ENCODE measurements at regions of chr11 and their contacts with region 1.

Region 1: DNA sequence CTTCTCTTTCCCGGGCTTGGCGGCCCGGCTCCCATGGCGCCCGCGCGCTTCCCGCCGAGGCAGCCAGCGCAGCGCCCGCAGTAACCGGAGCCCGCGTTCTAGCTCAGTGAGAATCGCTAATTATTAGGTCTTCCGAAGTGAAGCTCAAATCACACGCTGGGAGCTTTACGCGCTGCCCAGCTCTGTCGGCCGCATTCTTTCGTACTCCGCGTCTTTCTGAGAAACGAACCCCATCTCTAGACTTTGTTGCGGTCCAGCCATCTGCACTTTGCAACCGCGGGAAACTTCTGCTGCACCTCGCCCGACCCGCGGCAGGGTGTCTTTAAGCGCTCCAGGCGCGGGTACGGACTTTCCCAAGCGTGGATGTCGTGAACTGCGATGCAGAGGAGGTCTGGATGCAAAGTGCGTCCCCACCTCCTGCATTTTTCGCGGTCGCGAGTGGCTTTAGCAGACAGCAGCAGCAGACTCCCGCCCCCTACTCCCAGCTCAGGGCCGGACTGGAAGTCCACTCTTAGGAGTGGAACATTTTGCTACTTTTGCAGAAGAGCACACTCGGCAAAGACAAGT is 6.0 kb upstream of the PAX6 start:
- DNase-seq: peak; percentile 44
- ATAC-seq: no peak
- H3K4me3 Mint-ChIP-seq: peak overlapping the region; percentile 26
- H3K27ac Mint-ChIP-seq: no peak overlapping the region
- H3K4me1 Mint-ChIP-seq: peaks cover 32% of the 10 kb centered on the region
- H3K27me3 Mint-ChIP-seq: peaks cover 58% of the 10 kb centered on the region

Region 2: GRCh38 chr11:31798554-31799434 is 18.3 kb before region 1 on chr11:
- CTCF ChIA-PET with region 1: interaction called, 4 read pairs
- POLR2A ChIA-PET with region 1: no interaction called
- intact Hi-C with region 1: loop called in 1 of 2 experiments (anchors 1 kb)
- DNase-seq: peak; percentile 57
- ATAC-seq: peak; percentile 47
- H3K4me3 Mint-ChIP-seq: no peak overlapping the region
- H3K27ac Mint-ChIP-seq: no peak overlapping the region
- H3K4me1 Mint-ChIP-seq: peaks cover 36% of the 10 kb centered on the region
- H3K27me3 Mint-ChIP-seq: peaks cover 74% of the 10 kb centered on the region

Region 3: DNA sequence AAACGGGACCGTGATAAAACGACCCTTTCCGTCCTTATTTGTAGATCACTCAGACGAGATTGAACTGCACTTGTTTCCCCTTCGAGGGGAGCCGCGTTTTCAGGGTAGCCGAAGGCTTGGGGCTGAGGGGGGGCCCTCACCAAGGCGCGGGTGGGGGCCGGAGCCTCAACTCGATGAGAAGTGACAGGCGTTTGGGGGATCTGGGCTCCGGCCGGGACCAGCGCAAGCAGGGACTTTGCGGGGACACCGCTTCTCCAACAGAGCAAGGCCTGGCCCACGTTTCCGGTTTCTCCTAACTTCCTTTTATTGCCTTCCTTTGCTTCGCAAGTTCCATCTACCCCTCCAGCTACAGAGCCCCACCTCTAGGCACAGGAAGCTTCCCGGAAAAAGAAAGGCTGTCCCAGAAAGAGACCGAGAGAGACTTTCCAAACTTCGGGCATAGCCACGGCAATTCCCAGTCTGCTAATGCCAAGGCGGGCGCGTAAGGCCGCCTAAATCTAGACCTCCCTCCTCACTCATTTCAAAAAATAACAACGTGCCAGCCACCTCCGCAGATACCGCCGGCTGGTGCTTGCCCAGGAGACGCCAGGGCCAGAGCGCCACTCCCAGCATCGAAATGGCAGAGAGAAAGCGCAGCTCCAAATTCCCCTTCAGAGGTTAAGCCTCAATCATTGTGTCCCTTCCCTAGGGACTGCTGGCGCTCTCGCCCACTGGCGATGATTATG is 12.7 kb before region 1 on chr11:
- CTCF ChIA-PET with region 1: interaction called, 4 read pairs
- POLR2A ChIA-PET with region 1: no interaction called
- intact Hi-C with region 1: loop called (anchors 1 to 2 kb)
- DNase-seq: peak; percentile 30
- ATAC-seq: no peak
- H3K4me3 Mint-ChIP-seq: peak overlapping the region; percentile 39
- H3K27ac Mint-ChIP-seq: no peak overlapping the region
- H3K4me1 Mint-ChIP-seq: peaks cover 41% of the 10 kb centered on the region
- H3K27me3 Mint-ChIP-seq: peaks cover 82% of the 10 kb centered on the region

Region 4: DNA sequence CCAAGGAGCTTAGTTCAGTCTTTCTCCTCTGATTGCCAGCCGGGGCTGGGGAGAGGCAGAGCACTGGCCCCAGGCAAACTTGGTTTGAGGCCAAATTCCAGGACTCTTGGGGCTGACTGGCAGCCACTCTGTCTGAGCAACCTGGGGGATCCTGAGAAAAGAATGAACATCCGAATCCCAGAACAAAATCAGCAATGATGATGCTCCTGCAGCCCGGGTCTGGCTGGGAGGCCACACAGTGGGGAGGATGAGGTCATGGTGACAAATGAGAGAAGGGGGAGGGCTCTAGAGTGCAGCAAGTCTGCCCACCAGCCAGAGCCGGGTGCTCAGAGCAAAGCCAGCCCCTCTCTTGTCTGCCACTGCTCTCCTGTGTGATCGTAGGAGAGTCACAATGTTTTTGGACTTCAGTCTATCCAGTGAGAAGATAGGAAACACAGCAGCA is 65.8 kb after region 1 on chr11:
- CTCF ChIA-PET with region 1: no interaction called
- POLR2A ChIA-PET with region 1: no interaction called
- intact Hi-C with region 1: no loop called
- DNase-seq: no peak
- ATAC-seq: no peak
- H3K4me3 Mint-ChIP-seq: no peak overlapping the region
- H3K27ac Mint-ChIP-seq: no peak overlapping the region
- H3K4me1 Mint-ChIP-seq: no peaks in the 10 kb centered on the region
- H3K27me3 Mint-ChIP-seq: peaks cover 18% of the 10 kb centered on the region

Region 5: DNA sequence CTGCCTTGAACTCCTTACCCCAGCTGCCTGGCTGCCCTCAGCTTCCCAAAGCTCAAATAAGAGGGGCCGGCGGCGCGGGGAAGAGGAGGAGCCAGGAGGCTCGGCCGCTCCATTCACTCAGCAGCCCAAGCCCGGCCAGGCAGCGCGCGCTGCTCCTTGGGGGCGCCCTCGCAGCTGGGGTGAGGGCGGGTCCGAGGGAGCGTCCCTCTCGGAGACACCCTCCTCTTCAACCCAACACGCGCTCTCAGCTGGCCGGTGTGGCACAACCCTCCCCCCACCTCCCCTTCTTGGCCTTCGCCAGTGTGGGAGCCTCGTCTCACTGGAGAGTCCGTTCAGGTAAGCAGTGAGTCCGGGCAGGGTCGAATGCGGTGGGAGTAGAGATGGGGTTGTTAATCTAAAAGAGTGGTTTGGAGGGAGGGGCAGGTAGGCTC is 618.4 kb after region 1 on chr11 and contains the start of gene WT1:
- CTCF ChIA-PET with region 1: no interaction called
- POLR2A ChIA-PET with region 1: no interaction called
- intact Hi-C with region 1: loop called (anchors 5 kb)
- DNase-seq: peak; percentile 21
- ATAC-seq: no peak
- H3K4me3 Mint-ChIP-seq: peak within 1 kb of the TSS; percentile 13
- H3K27ac Mint-ChIP-seq: no peak within 1 kb of the TSS
- H3K4me1 Mint-ChIP-seq: peaks cover 37% of the 10 kb centered on the region
- H3K27me3 Mint-ChIP-seq: peaks cover 78% of the 10 kb centered on the region
- total RNA-seq, gene WT1: not detected

Measured in activated CD4-positive, alpha-beta T cell treated with anti-CD3 and anti-CD28 coated beads for 36 hours (primary cell).